ENCODE measurements at regions of chr17 and their contacts with region 1.

Region 1: GRCh38 chr17:42843358-42843934 is 934 bp upstream of the AOC2 start:
- DNase-seq: no peak
- H3K4me3 ChIP-seq: no peak overlapping the region
- H3K27ac ChIP-seq: peak overlapping the region in 3 of 4 donors; percentile 23 to 47 (median 32)
- H3K4me1 ChIP-seq: peaks cover 0 to 35% (median 11%) of the 10 kb centered on the region in 3 donors
- H3K27me3 ChIP-seq: no peaks in the 10 kb centered on the region
- CTCF ChIP-seq: peak; percentile 49 to 90 (median 84)
- POLR2A ChIP-seq: no peak

Region 2: DNA sequence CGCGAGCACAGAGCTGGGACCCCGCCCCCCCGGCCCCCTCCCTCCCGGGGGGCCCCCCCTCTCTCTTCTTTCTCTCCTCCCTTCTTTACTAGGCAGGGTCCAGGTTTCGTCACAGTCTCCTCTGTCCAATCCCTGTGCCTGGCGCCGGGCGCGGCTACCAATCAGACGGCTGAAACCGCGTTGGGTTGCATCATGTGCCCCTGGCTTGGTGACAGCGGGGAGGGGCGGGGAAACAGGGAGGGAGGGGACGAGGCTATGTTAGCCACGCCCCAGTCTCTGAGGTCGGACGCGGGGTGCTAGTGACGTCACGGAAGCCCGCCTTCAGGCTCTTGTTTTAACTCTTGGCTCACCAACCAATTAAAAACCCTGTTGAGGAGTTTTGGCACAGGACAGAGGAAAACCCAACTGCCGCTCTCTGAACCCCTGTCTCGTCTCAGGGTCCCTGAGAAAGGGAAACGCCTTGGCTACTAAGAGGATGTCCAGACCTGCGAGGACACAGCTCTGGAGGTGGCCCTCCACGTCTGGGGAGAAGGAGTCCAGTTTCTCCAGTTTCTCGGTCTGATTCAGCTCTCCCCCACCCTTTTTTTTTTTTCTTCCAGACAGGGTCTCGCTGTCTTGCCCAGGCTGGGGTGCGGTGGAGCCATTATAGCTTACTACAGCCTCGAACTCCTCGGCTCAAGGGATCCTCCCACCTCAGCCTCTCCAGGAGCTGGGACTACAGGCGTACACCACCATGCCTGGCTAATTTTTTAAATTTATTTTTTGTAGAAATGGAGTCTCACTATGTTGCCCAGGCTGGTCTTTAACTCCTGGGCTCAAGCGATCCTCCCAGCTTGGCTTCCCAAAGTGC is 166.2 kb before region 1 on chr17:
- intact Hi-C with region 1: no loop called
- DNase-seq: peak; percentile 98
- H3K4me3 ChIP-seq: peak overlapping the region; percentile 83 to 97 (median 94)
- H3K27ac ChIP-seq: peak overlapping the region; percentile 98 to 99 (median 98)
- H3K4me1 ChIP-seq: peaks cover 55 to 91% (median 61%) of the 10 kb centered on the region in 3 donors
- H3K27me3 ChIP-seq: peaks cover 0 to 27% (median 0%) of the 10 kb centered on the region in 4 donors
- CTCF ChIP-seq: no peak
- POLR2A ChIP-seq: no peak

Region 3: DNA sequence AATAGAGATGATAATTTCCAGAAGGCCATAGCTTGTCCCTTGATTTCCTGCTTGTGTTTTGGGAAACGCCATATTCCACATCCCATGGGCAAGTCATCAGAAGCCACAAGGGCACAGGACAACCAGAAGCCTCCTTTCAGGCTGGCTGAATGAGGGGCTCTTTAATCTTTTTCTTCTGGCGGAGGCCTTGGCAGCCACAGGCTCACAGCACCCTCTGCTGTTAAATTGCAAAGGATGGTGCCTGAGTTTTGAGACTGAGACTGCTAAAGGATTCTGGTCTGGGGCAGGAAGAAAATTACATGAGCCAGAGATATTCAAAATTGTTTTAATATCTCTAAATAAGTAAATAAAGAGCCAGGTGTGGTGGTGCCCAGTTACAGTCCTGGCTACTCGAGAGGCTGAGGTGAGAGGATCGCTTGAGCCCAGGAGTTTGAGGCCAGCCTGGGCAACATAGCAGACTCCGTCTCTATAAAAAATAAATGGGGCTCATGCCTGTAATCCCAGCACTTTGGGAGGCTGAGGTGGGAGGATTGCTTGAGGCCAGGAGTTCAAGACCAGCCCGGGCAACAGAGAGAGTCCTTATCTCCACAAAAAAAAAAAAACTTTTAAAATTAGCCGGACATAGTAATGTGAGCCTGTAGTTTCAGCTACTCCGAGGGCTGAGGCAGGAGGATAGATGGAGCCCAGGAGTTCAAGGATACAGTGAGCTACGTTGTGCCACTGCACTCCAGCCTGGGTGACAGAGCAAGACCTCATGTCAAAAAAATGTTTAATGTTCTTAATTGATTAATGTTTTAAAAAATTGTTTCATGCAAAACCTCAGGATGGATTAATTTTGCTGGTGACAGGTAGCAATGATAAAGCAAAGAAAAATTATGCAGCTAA is 94.5 kb after region 1 on chr17:
- intact Hi-C with region 1: loop called (anchors 10 kb)
- DNase-seq: no peak
- H3K4me3 ChIP-seq: no peak overlapping the region
- H3K27ac ChIP-seq: no peak overlapping the region
- H3K4me1 ChIP-seq: no peaks in the 10 kb centered on the region
- H3K27me3 ChIP-seq: peaks cover 0 to 7% (median 0%) of the 10 kb centered on the region in 4 donors
- CTCF ChIP-seq: peak; percentile 29 to 64 (median 45)
- POLR2A ChIP-seq: no peak

Measured in esophagus squamous epithelium (tissue), 5 donors.